ENCODE measurements at regions of chr1 and their contacts with region 1.

Region 1: GRCh38 chr1:211830330-211831142 is at the start of gene LPGAT1:
- DNase-seq: no peak
- ATAC-seq: peak; percentile 82
- H3K4me3 ChIP-seq: peak within 1 kb of the TSS; percentile 98
- H3K27ac ChIP-seq: peak within 1 kb of the TSS; percentile 85
- H3K4me1 ChIP-seq: peaks cover 28% of the 10 kb centered on the region
- H3K27me3 ChIP-seq: no peaks in the 10 kb centered on the region
- CTCF ChIP-seq: peak; percentile 50 to 63 (median 53); a peak in 5 of 6 replicates
- EP300 ChIP-seq: no peak
- POLR2A ChIP-seq: peak; percentile 75
- RAD21 ChIP-seq: peak; percentile 25; the same call in 1 of the 2 replicates
- polyA plus RNA-seq, gene LPGAT1: 5.8 to 6.4 TPM

Region 2: DNA sequence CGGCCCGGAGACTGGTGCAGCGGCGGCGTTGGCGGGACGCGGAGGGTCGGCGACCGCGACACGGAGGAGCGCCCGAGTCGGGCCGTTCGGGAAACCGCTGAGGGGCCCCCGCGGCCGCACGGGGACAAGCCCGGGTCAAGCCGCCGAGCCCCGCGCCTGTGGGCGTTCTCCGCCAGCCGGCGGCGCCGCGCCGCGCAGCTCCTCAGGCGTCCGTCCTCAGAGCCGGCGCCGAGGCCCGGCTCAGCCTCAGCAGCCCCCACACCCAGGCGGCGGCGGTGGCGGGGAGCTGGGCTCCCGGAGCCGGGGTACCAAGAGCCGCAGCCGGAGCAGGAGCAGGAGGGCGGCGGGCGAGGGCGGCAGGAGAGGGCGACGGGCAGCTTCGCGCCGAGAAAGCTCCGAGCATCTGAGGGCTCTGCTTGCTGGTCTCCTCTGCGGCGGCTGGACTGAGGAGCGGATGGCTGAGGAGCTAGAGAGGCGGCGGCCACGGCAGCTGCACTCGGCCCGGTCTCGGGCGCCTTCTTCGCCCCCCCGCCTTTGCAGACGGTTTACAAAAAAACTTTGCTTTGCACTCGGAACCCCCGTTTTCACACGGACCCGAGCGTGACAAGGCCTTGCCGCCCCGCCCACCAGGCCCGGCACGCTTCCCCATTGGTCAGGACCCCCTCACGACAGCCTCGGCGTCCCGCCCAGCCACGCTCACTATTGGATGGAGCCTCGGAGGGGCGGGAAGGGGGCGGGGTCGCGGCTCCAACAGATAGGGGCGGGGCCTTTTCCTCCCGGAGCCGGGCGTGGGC is 251.7 kb before region 1 on chr1 and contains the start of gene SLC30A1:
- CTCF ChIA-PET with region 1: no interaction called
- POLR2A ChIA-PET with region 1: no interaction called
- RAD21 ChIA-PET with region 1: no interaction called
- SMC1A ChIA-PET with region 1: no interaction called
- in situ Hi-C with region 1: no loop called
- intact Hi-C with region 1: loop called (anchors 5 kb)
- DNase-seq: peak; percentile 83
- ATAC-seq: peak; percentile 87
- H3K4me3 ChIP-seq: peak within 1 kb of the TSS; percentile 96
- H3K27ac ChIP-seq: peak within 1 kb of the TSS; percentile 84
- H3K4me1 ChIP-seq: peaks cover 23% of the 10 kb centered on the region
- H3K27me3 ChIP-seq: no peaks in the 10 kb centered on the region
- CTCF ChIP-seq: no peak
- EP300 ChIP-seq: peak in 1 of 2 experiments; percentile 27; a peak in 1 of 4 replicates
- POLR2A ChIP-seq: peak; percentile 91
- RAD21 ChIP-seq: no peak
- polyA plus RNA-seq, gene SLC30A1: 3.5 to 4.0 TPM

Region 3: GRCh38 chr1:211816586-211816985 is 13.9 kb before region 1 on chr1:
- CTCF ChIA-PET with region 1: interaction called, 23 read pairs
- POLR2A ChIA-PET with region 1: interaction called, 4 read pairs
- RAD21 ChIA-PET with region 1: interaction called, 3 read pairs
- SMC1A ChIA-PET with region 1: interaction called, 9 read pairs
- in situ Hi-C with region 1: no loop called
- intact Hi-C with region 1: no loop called
- DNase-seq: no peak
- ATAC-seq: no peak
- H3K4me3 ChIP-seq: no peak overlapping the region
- H3K27ac ChIP-seq: no peak overlapping the region
- H3K4me1 ChIP-seq: no peaks in the 10 kb centered on the region
- H3K27me3 ChIP-seq: no peaks in the 10 kb centered on the region
- CTCF ChIP-seq: no peak
- EP300 ChIP-seq: no peak
- POLR2A ChIP-seq: no peak
- RAD21 ChIP-seq: no peak

Region 4: GRCh38 chr1:211843018-211843417 is 12.5 kb after region 1 on chr1:
- CTCF ChIA-PET with region 1: interaction called, 15 read pairs
- POLR2A ChIA-PET with region 1: interaction called, 3 read pairs
- RAD21 ChIA-PET with region 1: interaction called, 7 read pairs
- SMC1A ChIA-PET with region 1: interaction called, 14 read pairs
- in situ Hi-C with region 1: no loop called
- intact Hi-C with region 1: no loop called
- DNase-seq: no peak
- ATAC-seq: peak; percentile 63
- H3K4me3 ChIP-seq: no peak overlapping the region
- H3K27ac ChIP-seq: no peak overlapping the region
- H3K4me1 ChIP-seq: peaks cover 15% of the 10 kb centered on the region
- H3K27me3 ChIP-seq: no peaks in the 10 kb centered on the region
- CTCF ChIP-seq: no peak
- EP300 ChIP-seq: no peak
- POLR2A ChIP-seq: no peak
- RAD21 ChIP-seq: no peak

Region 5: DNA sequence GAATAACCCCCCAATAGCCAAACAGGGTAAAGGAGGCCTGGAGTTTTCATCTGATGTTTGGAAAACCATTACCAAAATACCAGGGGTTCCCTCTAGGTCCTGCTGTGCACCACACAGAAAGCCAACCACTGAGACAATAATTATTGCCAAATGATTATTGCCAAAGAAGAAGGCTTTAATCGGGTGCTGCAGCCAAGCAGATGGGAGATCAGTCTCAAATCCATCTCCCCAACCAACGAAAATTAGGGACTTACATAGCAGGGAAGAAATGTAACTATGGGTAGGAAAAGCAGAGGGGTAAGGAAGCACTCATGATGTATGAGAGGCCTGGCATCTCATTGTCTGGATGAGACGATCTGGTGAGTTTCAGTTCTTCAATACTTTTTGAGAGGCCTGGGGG is 28.9 kb after region 1 on chr1:
- CTCF ChIA-PET with region 1: no interaction called
- POLR2A ChIA-PET with region 1: no interaction called
- RAD21 ChIA-PET with region 1: no interaction called
- SMC1A ChIA-PET with region 1: no interaction called
- in situ Hi-C with region 1: no loop called
- intact Hi-C with region 1: no loop called
- DNase-seq: no peak
- ATAC-seq: no peak
- H3K4me3 ChIP-seq: no peak overlapping the region
- H3K27ac ChIP-seq: no peak overlapping the region
- H3K4me1 ChIP-seq: no peaks in the 10 kb centered on the region
- H3K27me3 ChIP-seq: no peaks in the 10 kb centered on the region
- CTCF ChIP-seq: no peak
- EP300 ChIP-seq: no peak
- POLR2A ChIP-seq: no peak
- RAD21 ChIP-seq: no peak

Region 6: GRCh38 chr1:211944733-211945500 is 114.4 kb after region 1 on chr1:
- CTCF ChIA-PET with region 1: interaction called, 4 read pairs
- POLR2A ChIA-PET with region 1: interaction called, 4 read pairs
- RAD21 ChIA-PET with region 1: interaction called, 20 read pairs
- SMC1A ChIA-PET with region 1: interaction called, 6 read pairs
- in situ Hi-C with region 1: no loop called
- intact Hi-C with region 1: no loop called
- DNase-seq: no peak
- ATAC-seq: no peak
- H3K4me3 ChIP-seq: no peak overlapping the region
- H3K27ac ChIP-seq: no peak overlapping the region
- H3K4me1 ChIP-seq: peaks cover 8% of the 10 kb centered on the region; the same call in 1 of the 2 replicates
- H3K27me3 ChIP-seq: no peaks in the 10 kb centered on the region
- CTCF ChIP-seq: no peak
- EP300 ChIP-seq: no peak
- POLR2A ChIP-seq: no peak
- RAD21 ChIP-seq: no peak

Region 7: DNA sequence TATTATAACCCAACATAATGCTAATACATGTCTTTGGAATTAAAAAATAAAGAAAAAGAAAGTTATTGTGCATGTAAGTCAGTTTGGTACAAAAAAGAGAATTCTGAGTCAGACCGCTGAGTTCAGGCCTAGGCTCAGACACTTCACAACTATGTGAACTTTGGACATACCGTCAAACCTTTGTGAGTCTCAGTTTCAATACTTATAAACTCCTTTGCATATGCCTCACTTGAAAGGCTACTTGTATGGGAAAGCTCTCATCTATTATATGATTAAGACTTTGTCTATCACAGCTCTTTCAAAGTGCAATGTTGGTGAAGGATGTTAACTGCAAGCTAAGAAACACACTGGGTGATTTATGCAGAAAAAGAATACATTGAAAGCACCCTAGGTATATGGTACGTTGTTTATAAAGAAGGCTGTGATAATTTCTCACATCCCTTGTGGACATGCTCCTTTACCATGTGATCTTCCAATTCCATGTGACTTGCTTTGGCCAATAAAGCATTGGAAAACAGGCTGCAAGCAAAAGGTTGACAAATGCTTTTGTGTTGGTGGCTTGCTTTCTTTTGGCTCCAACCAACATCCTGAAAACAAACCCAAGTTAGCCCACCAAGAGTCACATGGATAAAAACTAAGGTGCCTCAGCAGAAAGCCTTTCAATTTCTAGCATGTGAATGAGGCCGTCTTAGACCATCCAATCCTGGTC is 155.2 kb after region 1 on chr1:
- CTCF ChIA-PET with region 1: interaction called, 4 read pairs
- POLR2A ChIA-PET with region 1: no interaction called
- RAD21 ChIA-PET with region 1: interaction called, 11 read pairs
- SMC1A ChIA-PET with region 1: interaction called, 6 read pairs
- in situ Hi-C with region 1: no loop called
- intact Hi-C with region 1: no loop called
- DNase-seq: peak; percentile 82
- ATAC-seq: peak; percentile 99
- H3K4me3 ChIP-seq: no peak overlapping the region
- H3K27ac ChIP-seq: peak overlapping the region; percentile 88
- H3K4me1 ChIP-seq: peaks cover 16% of the 10 kb centered on the region
- H3K27me3 ChIP-seq: no peaks in the 10 kb centered on the region
- CTCF ChIP-seq: no peak
- EP300 ChIP-seq: peak in 1 of 2 experiments; percentile 52; a peak in 1 of 4 replicates
- POLR2A ChIP-seq: no peak; the same call in 1 of the 2 replicates
- RAD21 ChIP-seq: no peak

Measured in GM12878 (cell line).